ENCODE measurements at regions of chr11 and their contacts with region 1.

Region 1: GRCh38 chr11:86818466-86819192 is 18.3 kb downstream of the PRSS23 start:
- DNase-seq: peak; percentile 75
- H3K4me3 Mint-ChIP-seq: no peak overlapping the region
- H3K27ac Mint-ChIP-seq: no peak overlapping the region
- H3K4me1 Mint-ChIP-seq: peaks cover 21% of the 10 kb centered on the region
- H3K27me3 Mint-ChIP-seq: no peaks in the 10 kb centered on the region
- CTCF ChIP-seq: peak; percentile 59

Region 2: GRCh38 chr11:86523738-86524619 is 294.6 kb before region 1 on chr11:
- CTCF ChIA-PET with region 1: no interaction called
- POLR2A ChIA-PET with region 1: no interaction called
- intact Hi-C with region 1: no loop called
- DNase-seq: peak; percentile 81
- H3K4me3 Mint-ChIP-seq: peak overlapping the region; percentile 11
- H3K27ac Mint-ChIP-seq: peak overlapping the region; percentile 74
- H3K4me1 Mint-ChIP-seq: peaks cover 28% of the 10 kb centered on the region
- H3K27me3 Mint-ChIP-seq: no peaks in the 10 kb centered on the region
- CTCF ChIP-seq: no peak

Region 3: GRCh38 chr11:86632499-86633269 is 185.9 kb before region 1 on chr11:
- CTCF ChIA-PET with region 1: no interaction called
- POLR2A ChIA-PET with region 1: no interaction called
- intact Hi-C with region 1: loop called (anchors 2 kb)
- DNase-seq: peak; percentile 79
- H3K4me3 Mint-ChIP-seq: no peak overlapping the region
- H3K27ac Mint-ChIP-seq: peak overlapping the region; percentile 27
- H3K4me1 Mint-ChIP-seq: peaks cover 5% of the 10 kb centered on the region
- H3K27me3 Mint-ChIP-seq: no peaks in the 10 kb centered on the region
- CTCF ChIP-seq: no peak

Region 4: GRCh38 chr11:86797133-86797532 is 21.5 kb before region 1 on chr11:
- CTCF ChIA-PET with region 1: no interaction called
- POLR2A ChIA-PET with region 1: no interaction called
- intact Hi-C with region 1: no loop called
- DNase-seq: no peak
- H3K4me3 Mint-ChIP-seq: no peak overlapping the region
- H3K27ac Mint-ChIP-seq: no peak overlapping the region
- H3K4me1 Mint-ChIP-seq: peaks cover 6% of the 10 kb centered on the region
- H3K27me3 Mint-ChIP-seq: no peaks in the 10 kb centered on the region
- CTCF ChIP-seq: no peak

Region 5: GRCh38 chr11:86861810-86862209 is 43.2 kb after region 1 on chr11:
- CTCF ChIA-PET with region 1: no interaction called
- POLR2A ChIA-PET with region 1: no interaction called
- intact Hi-C with region 1: no loop called
- DNase-seq: peak; percentile 9
- H3K4me3 Mint-ChIP-seq: no peak overlapping the region
- H3K27ac Mint-ChIP-seq: no peak overlapping the region
- H3K4me1 Mint-ChIP-seq: no peaks in the 10 kb centered on the region
- H3K27me3 Mint-ChIP-seq: peaks cover 35% of the 10 kb centered on the region
- CTCF ChIP-seq: peak; percentile 9

Region 6: GRCh38 chr11:86919557-86920210 is 101.1 kb after region 1 on chr11:
- CTCF ChIA-PET with region 1: interaction called, 5 read pairs
- POLR2A ChIA-PET with region 1: no interaction called
- intact Hi-C with region 1: loop called (anchors 1 kb)
- DNase-seq: peak; percentile 68
- H3K4me3 Mint-ChIP-seq: no peak overlapping the region
- H3K27ac Mint-ChIP-seq: no peak overlapping the region
- H3K4me1 Mint-ChIP-seq: peaks cover 19% of the 10 kb centered on the region
- H3K27me3 Mint-ChIP-seq: no peaks in the 10 kb centered on the region
- CTCF ChIP-seq: peak; percentile 69